GM12878 (cell line): ENCODE measurements at regions of chr3 and their contacts with region 1.

Region 1: DNA sequence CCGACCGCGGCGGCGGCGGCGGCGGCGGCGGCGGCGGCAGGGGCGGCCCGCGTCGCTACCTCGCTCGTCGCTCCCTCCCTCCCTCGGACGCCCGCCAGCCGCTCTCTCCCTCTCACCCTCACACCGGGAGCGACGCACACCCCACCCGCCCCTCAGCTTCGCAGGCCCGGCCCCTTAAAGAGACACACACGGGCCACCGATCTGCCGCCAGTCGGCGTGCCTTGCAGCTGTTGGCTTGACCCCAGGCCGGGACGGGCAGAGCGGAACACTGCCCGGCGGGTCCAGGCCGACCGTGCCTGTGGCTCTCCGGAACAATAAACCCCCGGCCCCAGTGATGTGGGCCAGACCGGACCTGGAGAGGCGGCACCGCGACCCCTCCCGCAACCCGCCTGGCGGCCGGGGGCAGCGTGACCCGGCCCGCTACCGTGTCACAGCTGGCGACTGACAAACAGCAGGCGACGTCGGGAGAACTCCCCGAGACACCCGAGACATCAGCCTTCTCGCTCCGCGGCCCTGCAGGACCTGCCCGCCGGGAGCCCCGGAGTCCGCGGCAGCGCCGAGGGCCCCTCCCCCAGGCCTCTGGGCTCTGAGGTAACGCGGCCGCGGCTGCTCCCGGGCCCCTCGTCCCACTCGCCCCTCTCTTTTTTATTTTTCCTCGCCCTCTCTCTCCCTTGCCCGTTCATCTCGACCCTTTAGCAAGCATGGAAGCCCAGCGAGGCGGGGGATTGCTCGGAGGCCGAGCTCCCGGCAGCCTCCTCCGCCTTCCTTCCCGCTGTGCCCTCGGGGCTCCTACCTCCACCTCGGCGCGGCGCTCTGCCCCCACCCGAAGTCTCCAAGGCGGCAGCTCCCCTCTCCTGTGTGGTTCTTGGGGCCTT is at the start of gene SETD2:
- DNase-seq: peak; percentile 43
- ATAC-seq: peak; percentile 93
- H3K4me3 ChIP-seq: peak within 1 kb of the TSS; percentile 83
- H3K27ac ChIP-seq: peak within 1 kb of the TSS; percentile 74
- H3K4me1 ChIP-seq: peaks cover 22% of the 10 kb centered on the region
- H3K27me3 ChIP-seq: no peaks in the 10 kb centered on the region
- CTCF ChIP-seq: peak; percentile 54 to 75 (median 59); a peak in 4 of 6 replicates
- EP300 ChIP-seq: no peak
- POLR2A ChIP-seq: peak; percentile 69
- RAD21 ChIP-seq: peak; percentile 82
- polyA plus RNA-seq, gene SETD2: 8.4 to 8.5 TPM

Region 2: GRCh38 chr3:46923559-46924350 is 240.5 kb before region 1 on chr3:
- CTCF ChIA-PET with region 1: interaction called, 3 read pairs
- POLR2A ChIA-PET with region 1: interaction called, 3 read pairs
- RAD21 ChIA-PET with region 1: no interaction called
- SMC1A ChIA-PET with region 1: no interaction called
- in situ Hi-C with region 1: no loop called
- intact Hi-C with region 1: loop called (anchors 5 kb)
- DNase-seq: no peak
- ATAC-seq: no peak
- H3K4me3 ChIP-seq: no peak overlapping the region
- H3K27ac ChIP-seq: no peak overlapping the region
- H3K4me1 ChIP-seq: peaks cover 39% of the 10 kb centered on the region
- H3K27me3 ChIP-seq: no peaks in the 10 kb centered on the region
- CTCF ChIP-seq: peak; percentile 35 to 37 (median 37); a peak in 5 of 6 replicates
- EP300 ChIP-seq: no peak
- POLR2A ChIP-seq: no peak
- RAD21 ChIP-seq: peak; percentile 67

Region 3: DNA sequence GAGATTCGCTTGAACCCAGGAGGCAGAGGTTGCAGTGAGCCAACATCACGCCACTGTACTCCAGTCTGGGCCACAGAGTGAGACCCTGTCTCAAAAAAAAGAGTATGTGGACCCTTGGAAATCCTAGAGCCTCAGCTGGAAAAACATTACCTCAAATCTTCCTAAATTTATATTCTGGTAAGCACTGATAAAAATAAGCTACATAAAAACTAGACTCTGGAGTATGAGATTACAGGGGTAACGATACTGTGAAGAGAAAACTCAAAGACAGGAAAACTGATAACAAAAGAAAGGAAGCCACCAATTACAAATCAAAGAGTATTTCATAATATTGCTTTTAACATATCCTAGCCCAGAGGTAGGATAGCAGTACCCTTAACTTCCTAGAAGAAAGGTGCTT is 30.6 kb before region 1 on chr3:
- CTCF ChIA-PET with region 1: no interaction called
- POLR2A ChIA-PET with region 1: interaction called, 3 read pairs
- RAD21 ChIA-PET with region 1: interaction called, 39 read pairs
- SMC1A ChIA-PET with region 1: interaction called, 40 read pairs
- in situ Hi-C with region 1: no loop called
- intact Hi-C with region 1: no loop called
- DNase-seq: no peak
- ATAC-seq: no peak
- H3K4me3 ChIP-seq: no peak overlapping the region
- H3K27ac ChIP-seq: no peak overlapping the region
- H3K4me1 ChIP-seq: no peaks in the 10 kb centered on the region
- H3K27me3 ChIP-seq: no peaks in the 10 kb centered on the region
- CTCF ChIP-seq: no peak
- EP300 ChIP-seq: no peak
- POLR2A ChIP-seq: no peak
- RAD21 ChIP-seq: no peak

Region 4: GRCh38 chr3:47176582-47176981 is 12.3 kb after region 1 on chr3:
- CTCF ChIA-PET with region 1: interaction called, 14 read pairs
- POLR2A ChIA-PET with region 1: interaction called, 3 read pairs
- RAD21 ChIA-PET with region 1: interaction called, 11 read pairs
- SMC1A ChIA-PET with region 1: interaction called, 10 read pairs
- in situ Hi-C with region 1: no loop called
- intact Hi-C with region 1: no loop called
- DNase-seq: no peak
- ATAC-seq: no peak
- H3K4me3 ChIP-seq: no peak overlapping the region
- H3K27ac ChIP-seq: peak overlapping the region; percentile 91
- H3K4me1 ChIP-seq: peaks cover 23% of the 10 kb centered on the region
- H3K27me3 ChIP-seq: no peaks in the 10 kb centered on the region
- CTCF ChIP-seq: no peak
- EP300 ChIP-seq: no peak
- POLR2A ChIP-seq: no peak
- RAD21 ChIP-seq: no peak

Region 5: DNA sequence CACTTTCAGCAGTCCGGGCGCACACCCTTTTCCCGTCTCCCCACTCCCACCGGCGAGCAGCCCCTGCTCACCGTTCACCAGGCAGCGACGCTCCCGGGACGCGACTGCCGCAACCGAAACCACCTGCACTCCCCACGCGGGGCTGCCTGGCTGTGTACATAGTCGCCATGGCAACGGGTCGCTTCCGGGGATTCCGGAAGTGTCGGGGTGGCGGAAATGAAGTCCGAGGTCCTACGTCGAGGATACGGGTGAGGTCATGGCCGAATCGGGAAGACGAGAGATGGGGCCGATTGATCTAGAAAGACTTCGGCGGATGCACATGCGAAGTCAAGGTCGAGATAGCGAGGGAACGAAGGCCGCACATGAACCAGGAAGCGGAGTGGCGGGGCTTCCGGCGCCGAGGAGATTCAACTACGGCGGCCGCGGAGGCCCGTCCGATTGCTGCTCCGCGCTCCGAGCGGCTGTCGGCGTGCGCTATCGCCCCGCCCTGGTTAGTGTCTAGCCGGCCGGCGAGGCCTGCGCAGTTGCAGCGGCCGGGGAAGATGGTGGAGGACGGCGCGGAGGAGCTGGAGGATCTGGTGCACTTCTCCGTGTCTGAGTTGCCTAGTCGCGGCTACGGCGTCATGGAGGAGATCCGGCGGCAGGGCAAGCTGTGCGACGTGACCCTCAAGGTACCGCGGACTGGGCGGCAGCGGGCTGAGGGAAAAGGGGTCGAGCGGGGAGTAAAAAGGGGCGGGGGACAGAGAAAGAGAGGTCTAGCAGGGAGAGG is 118.4 kb after region 1 on chr3 and contains the starts of genes KIF9 and KLHL18:
- CTCF ChIA-PET with region 1: interaction called, 21 read pairs
- POLR2A ChIA-PET with region 1: interaction called, 5 read pairs
- RAD21 ChIA-PET with region 1: interaction called, 6 read pairs
- SMC1A ChIA-PET with region 1: interaction called, 6 read pairs
- in situ Hi-C with region 1: no loop called
- intact Hi-C with region 1: loop called (anchors 2 kb)
- DNase-seq: peak; percentile 89
- ATAC-seq: peak; percentile 90
- H3K4me3 ChIP-seq: peak within 1 kb of the TSS; percentile 95
- H3K27ac ChIP-seq: peak within 1 kb of the TSS; percentile 92
- H3K4me1 ChIP-seq: peaks cover 12% of the 10 kb centered on the region
- H3K27me3 ChIP-seq: no peaks in the 10 kb centered on the region
- CTCF ChIP-seq: peak in 1 of 3 experiments; percentile 9; a peak in 1 of 6 replicates
- EP300 ChIP-seq: no peak; a peak in 1 of 4 replicates
- POLR2A ChIP-seq: peak; percentile 96
- RAD21 ChIP-seq: no peak
- polyA plus RNA-seq, gene KIF9: 7.6 to 8.0 TPM
- polyA plus RNA-seq, gene KLHL18: 65.6 to 69.8 TPM

Region 6: GRCh38 chr3:47324278-47324865 is 160.1 kb after region 1 on chr3:
- CTCF ChIA-PET with region 1: interaction called, 82 read pairs
- POLR2A ChIA-PET with region 1: interaction called, 4 read pairs
- RAD21 ChIA-PET with region 1: interaction called, 56 read pairs
- SMC1A ChIA-PET with region 1: interaction called, 42 read pairs
- in situ Hi-C with region 1: no loop called
- intact Hi-C with region 1: loop called (anchors 10 kb)
- DNase-seq: peak; percentile 24
- ATAC-seq: peak; percentile 89
- H3K4me3 ChIP-seq: no peak overlapping the region
- H3K27ac ChIP-seq: no peak overlapping the region
- H3K4me1 ChIP-seq: no peaks in the 10 kb centered on the region
- H3K27me3 ChIP-seq: no peaks in the 10 kb centered on the region
- CTCF ChIP-seq: peak; percentile 70 to 84 (median 73)
- EP300 ChIP-seq: no peak
- POLR2A ChIP-seq: no peak
- RAD21 ChIP-seq: peak; percentile 93